Right ventricle myocardium superior (tissue), 1 donor: ENCODE measurements at regions of chr6 and their contacts with region 1.

Region 1: DNA sequence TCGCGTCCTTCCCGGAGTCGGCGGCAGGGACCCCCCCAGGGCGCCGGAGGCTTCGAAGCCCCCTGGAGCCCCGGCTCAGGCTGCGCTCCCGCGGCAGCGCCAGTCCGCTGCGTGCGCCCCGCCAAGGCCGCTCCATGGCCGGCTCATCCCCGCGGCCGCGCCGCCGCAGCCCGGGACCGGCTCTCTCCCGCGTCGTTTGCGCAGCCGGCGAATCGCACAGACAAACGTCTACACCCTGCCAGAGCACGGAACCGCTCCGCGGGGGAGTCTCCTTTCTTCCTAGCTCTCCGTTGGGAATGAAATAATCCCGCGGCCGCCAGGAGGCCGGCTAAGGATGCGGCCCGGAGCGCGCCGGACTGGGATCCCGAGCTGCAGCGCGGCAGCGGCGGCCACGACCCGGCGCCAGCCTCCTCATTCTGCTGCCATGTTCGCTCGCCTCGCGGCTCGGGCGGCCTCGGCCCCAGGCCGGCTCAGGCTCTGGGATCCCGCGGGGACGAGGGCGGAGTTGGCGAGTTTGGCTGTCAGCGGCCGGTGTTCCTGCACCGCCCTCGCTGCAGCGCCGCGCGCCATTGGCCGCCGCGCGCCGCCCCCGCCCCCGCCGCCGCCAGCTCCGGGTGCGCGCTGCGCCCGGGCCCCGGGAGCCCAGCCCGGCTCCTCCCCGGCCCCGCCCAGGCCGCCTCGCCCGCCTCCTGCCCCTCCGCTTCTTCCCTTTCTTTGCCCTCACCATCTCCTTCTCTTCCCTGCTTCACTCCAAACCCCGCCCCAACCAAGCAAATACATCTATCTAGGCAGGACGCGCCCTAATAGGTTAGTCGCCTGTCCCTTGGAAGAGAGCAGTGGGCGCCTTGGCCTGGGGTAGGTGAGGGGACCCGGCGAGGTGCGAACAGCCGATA is at the start of gene GFOD1:
- DNase-seq: peak; percentile 95
- ATAC-seq: peak; percentile 90
- total RNA-seq, gene GFOD1: 46.2 TPM

Region 2: GRCh38 chr6:13360671-13361550 is 126.5 kb before region 1 on chr6:
- intact Hi-C with region 1: loop called (anchors 10 kb)
- DNase-seq: peak; percentile 71
- ATAC-seq: peak; percentile 87

Region 3: DNA sequence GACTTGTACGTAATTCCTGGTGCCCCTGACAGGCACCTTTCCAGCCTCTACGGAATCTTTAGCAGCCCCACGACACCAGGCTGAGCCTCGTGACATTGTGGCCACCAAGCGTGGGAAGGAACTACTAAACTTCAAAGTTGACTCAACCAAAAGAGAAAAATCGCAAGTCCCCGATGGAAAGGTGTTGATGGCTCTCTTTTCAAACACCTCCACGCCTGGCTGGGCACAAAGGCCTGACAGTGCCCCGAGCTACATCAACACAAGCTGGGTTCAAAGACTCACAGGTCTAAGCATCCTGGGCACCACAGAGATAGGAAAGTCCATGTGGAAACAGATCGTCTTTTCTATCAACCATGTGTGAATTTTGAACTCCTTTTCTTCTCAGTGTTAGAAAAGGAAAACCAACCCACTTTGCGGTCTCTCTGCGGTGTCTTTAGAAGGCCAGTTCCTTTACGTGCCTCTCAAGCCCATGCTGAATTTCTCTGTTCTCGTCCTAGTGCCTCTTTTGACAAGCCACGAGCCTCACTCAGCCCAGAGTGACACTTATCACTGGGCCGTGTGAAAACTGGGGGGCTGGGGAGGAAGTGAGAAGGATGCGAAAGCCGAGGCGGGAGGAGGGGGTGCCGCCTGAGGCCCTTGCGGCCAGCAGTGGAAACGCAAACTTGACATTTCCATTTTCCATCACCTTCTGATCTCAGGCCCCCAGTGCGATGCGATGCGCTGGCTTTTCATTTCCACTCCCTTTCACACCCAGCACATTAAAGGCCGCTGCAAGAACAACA is 59.4 kb before region 1 on chr6:
- intact Hi-C with region 1: loop called (anchors 10 kb)
- DNase-seq: no peak
- ATAC-seq: no peak

Region 4: DNA sequence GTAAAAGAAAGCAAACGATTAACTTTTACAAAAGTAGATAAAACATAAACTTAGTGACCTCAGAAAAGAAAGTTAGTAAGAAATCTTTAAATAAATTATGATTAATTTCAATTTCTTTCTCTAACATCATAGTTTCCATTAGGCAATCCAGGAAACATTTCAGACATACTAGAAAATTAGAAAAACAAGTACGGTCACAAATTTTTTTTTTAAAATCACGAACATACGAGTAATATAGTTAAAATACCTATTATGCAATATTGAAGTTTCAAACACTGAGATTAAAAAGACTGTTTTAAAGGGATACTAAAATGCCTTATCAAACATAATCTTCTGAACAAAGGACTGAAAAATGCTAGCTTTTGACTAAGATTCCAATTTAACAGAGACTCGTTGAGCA is 153.9 kb after region 1 on chr6:
- intact Hi-C with region 1: no loop called
- DNase-seq: no peak
- ATAC-seq: no peak